Mammary epithelial cell (primary cell): ENCODE measurements at regions of chr2 and their contacts with region 1.

Region 1: DNA sequence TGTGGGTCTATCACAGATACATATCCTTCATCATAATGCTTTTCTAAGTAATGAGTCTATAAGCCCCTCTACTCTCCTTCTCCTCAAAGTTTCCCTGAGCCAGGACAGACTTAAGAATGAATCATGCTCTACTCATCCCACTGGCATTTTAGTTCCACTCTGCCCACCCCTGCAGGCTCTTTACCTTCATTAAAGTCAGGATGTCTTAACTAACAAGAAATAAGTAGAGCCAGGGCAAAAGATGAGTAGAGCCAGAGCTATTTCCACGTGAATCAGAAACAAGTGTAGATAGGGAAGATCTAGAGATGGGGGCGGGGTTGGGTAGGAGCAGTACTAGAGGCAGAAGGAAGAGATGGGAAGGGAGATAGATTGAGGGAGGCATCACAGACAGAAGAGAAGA is 790.5 kb downstream of the RNF144A start:
- DNase-seq: peak; percentile 90
- H3K4me3 ChIP-seq: no peak overlapping the region
- H3K27ac ChIP-seq: peak overlapping the region; percentile 93
- H3K4me1 ChIP-seq: peaks cover 52% of the 10 kb centered on the region
- H3K27me3 ChIP-seq: no peaks in the 10 kb centered on the region
- CTCF ChIP-seq: no peak

Region 2: DNA sequence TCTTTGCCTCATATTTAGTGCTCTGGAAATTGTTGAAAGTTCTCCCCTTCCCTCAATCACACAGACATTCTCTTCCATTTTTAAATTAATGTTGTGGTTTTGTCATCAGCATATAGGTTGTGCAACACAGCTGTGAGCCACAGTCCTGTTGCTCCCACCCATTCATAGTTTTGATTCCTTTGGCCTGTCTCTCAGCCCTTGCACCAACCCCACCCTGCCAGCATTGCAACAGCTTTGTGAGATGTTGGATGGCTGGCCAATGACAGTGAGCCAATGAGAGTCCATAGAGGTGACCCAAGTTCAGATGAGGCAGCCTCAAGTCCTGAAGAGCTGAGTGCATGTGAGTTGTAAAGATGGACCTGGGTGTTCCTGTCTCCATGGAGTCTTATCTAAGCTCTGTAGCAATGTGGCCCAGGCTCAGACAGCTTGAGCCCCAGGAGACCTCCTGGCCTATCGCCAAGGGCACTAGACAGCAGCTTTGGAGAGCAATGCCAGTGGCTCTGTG is 15.0 kb before region 1 on chr2:
- CTCF ChIA-PET with region 1: no interaction called
- dilution Hi-C with region 1: no loop called
- in situ Hi-C with region 1: no loop called
- intact Hi-C with region 1: loop called (anchors 1 kb)
- DNase-seq: peak; percentile 96
- H3K4me3 ChIP-seq: no peak overlapping the region
- H3K27ac ChIP-seq: peak overlapping the region; percentile 79
- H3K4me1 ChIP-seq: peaks cover 19% of the 10 kb centered on the region
- H3K27me3 ChIP-seq: no peaks in the 10 kb centered on the region
- CTCF ChIP-seq: no peak

Region 3: DNA sequence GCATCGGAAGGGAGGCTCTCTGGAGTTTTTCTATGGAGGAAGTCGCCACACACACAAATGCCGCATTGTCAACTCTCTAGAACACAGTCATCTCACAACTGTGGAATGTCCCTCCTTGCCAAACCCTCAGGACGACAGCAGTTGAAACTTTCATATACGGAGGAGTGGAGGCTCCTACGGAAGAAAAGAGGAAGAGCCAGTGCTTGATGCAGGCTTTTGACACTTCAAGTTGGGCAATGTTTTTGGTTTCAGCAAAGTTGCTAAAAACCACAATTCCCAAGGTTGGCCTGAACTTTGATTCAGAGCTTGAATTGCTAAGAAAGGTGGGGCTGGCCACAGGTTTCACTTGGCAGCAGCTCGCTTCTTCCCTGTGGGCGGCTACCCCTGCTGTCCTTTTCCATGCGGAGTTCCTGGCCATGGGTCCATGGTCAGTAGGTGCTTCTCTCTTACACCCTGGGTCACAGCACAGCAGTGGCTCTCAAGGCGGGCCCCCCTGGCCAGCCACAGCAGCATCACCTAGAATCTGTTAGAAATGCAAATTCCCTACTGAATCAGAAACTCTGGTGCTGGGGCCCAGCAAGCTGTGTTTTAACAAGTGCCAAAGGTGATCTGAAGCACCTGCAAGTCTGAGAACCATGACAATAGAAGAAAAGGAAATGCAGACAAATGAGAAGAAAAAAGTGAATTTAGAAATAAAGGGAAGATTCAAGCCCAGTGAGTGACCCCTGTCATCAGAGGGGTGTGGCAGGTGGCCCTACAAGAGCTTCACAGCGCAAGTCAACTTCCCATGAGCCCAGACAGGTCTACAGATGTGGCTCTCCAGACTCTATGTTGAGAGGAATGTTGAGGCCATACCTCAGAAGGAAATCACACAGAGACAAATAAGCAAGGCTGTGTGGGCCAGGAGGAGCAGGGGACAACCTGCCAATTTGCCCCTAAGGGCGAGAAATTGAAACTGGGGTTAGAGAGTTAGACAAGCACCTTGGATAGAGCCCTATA is 65.9 kb after region 1 on chr2:
- CTCF ChIA-PET with region 1: no interaction called
- dilution Hi-C with region 1: no loop called
- in situ Hi-C with region 1: no loop called
- intact Hi-C with region 1: loop called (anchors 2 kb)
- DNase-seq: peak; percentile 99
- H3K4me3 ChIP-seq: peak overlapping the region in 2 of 3 experiments; percentile 7 to 24
- H3K27ac ChIP-seq: peak overlapping the region; percentile 99
- H3K4me1 ChIP-seq: peaks cover 31% of the 10 kb centered on the region
- H3K27me3 ChIP-seq: no peaks in the 10 kb centered on the region
- CTCF ChIP-seq: peak in 1 of 2 donors; percentile 5

Region 4: DNA sequence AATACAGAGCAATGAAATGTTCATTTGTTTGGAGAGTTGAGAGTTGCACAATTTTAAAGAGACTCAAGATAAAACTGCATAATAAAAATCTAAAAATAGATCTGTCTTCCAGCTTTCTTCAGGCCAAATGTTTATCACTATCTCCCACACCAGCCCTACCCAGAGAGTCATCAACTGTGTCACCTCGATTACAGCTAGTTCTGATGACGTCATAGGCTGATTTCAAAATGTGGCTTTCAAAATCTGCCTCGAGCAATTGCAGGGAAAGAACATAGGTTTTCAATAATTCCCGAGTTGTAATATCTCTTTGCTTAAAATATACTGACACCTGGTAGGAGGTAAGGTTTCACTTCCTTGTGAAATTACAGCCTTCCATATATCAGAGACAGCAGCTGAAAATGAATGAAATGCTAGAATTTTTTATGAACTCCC is 296.5 kb after region 1 on chr2:
- CTCF ChIA-PET with region 1: no interaction called
- dilution Hi-C with region 1: no loop called
- in situ Hi-C with region 1: no loop called
- intact Hi-C with region 1: loop called (anchors 10 kb)
- DNase-seq: peak; percentile 91
- H3K4me3 ChIP-seq: no peak overlapping the region
- H3K27ac ChIP-seq: no peak overlapping the region
- H3K4me1 ChIP-seq: peaks cover 14% of the 10 kb centered on the region
- H3K27me3 ChIP-seq: no peaks in the 10 kb centered on the region
- CTCF ChIP-seq: no peak

Region 5: DNA sequence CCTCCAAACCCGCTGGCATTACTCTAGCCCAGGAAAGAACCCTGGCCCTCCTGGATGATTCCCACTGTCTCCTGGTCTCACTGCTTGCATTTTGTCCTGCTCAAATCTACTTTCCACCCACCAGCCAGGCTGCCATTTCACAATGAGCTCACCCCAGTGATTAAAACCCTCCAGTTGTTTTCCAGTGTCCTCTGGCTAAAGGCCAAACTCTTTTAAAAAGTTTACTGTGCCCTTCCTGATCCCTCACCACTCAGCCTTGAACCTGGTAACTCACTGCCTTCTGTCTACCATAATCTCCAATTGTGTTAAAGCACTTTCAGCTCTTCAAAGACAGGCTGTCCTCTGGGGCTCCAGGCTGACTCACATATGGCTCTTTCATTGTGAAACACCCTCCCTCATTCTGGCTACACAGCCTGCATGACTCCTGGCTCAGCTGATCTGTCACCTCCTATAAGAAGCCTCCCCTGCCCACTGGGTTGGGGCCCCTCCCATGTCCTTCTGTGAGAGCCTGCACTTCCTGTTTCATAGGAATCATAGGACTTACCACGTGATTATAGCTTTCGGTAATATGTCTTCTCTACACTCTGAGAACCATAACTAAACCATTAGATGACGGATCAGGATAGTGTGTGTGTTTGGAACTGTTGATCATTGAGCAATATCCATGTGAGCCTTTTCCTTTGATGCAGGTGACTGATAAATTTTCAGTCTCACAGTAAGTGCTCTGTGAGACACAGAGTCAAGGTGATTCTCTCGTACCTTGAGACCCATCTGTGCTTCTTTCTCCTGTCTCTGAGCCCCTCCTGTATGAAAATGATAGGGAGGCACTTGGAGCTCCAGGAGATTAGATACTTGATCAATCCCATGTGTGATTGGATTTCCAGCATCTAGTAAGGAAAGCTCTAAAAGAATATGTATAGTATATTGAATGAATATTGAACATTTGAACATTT is 383.3 kb after region 1 on chr2:
- CTCF ChIA-PET with region 1: no interaction called
- dilution Hi-C with region 1: no loop called
- in situ Hi-C with region 1: no loop called
- intact Hi-C with region 1: loop called (anchors 10 kb)
- DNase-seq: peak; percentile 89
- H3K4me3 ChIP-seq: no peak overlapping the region
- H3K27ac ChIP-seq: no peak overlapping the region
- H3K4me1 ChIP-seq: peaks cover 35% of the 10 kb centered on the region
- H3K27me3 ChIP-seq: no peaks in the 10 kb centered on the region
- CTCF ChIP-seq: no peak

Region 6: DNA sequence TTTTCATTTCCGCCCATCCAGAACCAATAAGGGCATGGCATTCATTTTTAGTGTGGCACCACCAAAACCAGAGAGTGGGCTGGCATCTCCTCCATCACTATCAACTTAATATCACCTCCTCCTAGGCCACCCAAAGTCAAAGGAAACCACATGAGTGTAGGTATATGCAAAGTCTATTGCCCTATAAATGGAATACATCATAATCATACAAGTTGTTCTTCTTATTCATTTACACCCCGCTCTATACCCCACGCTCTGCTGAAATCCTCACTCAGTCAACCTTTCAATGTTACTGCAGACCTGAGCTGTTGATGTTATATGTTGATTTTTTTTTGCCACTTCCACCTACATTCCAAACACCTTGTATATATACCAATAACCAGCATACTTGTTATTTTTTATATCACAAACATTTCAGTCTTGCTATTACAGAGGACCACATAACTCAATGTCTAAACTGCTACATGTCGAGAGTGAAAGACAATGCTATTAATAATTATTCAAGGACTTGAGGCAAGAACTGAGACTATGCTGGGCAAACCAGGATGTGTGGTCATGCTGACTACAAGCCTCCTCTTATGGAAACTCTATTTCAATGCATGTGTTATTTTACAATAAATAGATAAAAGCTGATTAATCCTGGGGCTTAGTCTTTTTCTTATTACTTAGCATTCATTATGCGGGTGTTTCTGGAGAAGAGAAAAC is 507.6 kb after region 1 on chr2:
- CTCF ChIA-PET with region 1: no interaction called
- dilution Hi-C with region 1: no loop called
- in situ Hi-C with region 1: no loop called
- intact Hi-C with region 1: no loop called
- DNase-seq: no peak
- H3K4me3 ChIP-seq: no peak overlapping the region
- H3K27ac ChIP-seq: no peak overlapping the region
- H3K4me1 ChIP-seq: no peaks in the 10 kb centered on the region
- H3K27me3 ChIP-seq: no peaks in the 10 kb centered on the region
- CTCF ChIP-seq: no peak